Heart right ventricle (tissue), 16 donors: ENCODE measurements at regions of chr12 and their contacts with region 1.

Region 1: GRCh38 chr12:108850854-108851573 is 6.4 kb downstream of the SSH1 start:
- DNase-seq: peak; percentile 62 to 82
- ATAC-seq: peak in 7 of 8 donors; percentile 20 to 56 (median 53)
- H3K4me3 ChIP-seq: peak overlapping the region in 4 of 10 donors; percentile 35 to 40 (median 39)
- H3K27ac ChIP-seq: peak overlapping the region in 8 of 10 donors; percentile 65 to 98 (median 97)
- H3K4me1 ChIP-seq: peaks cover 50 to 96% (median 89%) of the 10 kb centered on the region in 9 donors
- H3K27me3 ChIP-seq: no peaks in the 10 kb centered on the region
- CTCF ChIP-seq: peak in 5 of 9 donors; percentile 17 to 45 (median 38)

Region 2: GRCh38 chr12:108664338-108665258 is 186.4 kb before region 1 on chr12:
- intact Hi-C with region 1: loop called in 6 of 10 experiments (anchors 2 to 5 kb)
- DNase-seq: peak; percentile 53 to 89
- ATAC-seq: peak; percentile 88 to 96 (median 92)
- H3K4me3 ChIP-seq: peak overlapping the region in 1 of 10 donors; percentile 14
- H3K27ac ChIP-seq: peak overlapping the region; percentile 36 to 86 (median 78)
- H3K4me1 ChIP-seq: peaks cover 7 to 71% (median 56%) of the 10 kb centered on the region in 9 donors
- H3K27me3 ChIP-seq: no peaks in the 10 kb centered on the region
- CTCF ChIP-seq: peak; percentile 79 to 99 (median 95)

Region 3: DNA sequence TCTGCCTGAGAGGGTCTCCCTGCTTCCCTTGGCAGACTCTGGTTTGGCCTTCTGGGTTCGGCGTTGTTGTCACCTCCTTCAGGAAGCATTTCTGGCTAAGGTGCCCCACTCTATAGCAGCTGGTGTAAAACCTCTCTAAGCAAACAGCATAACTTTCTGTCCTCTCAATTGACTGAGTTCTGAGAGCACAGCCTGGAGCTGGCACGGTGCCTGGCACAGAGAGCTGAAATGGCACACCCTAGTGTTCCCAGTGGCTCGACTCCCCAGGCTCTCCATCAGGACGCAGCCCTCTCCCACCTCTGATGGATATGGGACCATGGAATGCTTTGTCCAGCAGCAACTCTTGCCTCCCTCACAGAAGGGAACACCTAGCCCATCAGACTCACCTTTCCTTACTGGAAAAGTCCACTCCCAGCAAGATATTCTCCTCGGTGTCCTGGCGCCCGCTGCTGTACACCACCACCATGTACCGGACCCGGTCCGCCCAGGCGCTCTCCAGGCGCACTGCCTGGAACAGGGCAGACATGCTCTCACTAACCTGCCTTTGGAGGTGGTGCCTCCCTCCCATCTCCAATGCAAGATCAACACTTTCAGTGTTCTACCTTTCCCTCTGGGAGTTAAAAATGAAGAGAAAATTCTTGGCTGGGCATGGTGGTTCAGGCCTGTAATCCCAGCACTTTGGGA is 34.2 kb before region 1 on chr12:
- intact Hi-C with region 1: loop called in 1 of 10 experiments (anchors 5 kb)
- DNase-seq: peak in 1 of 2 donors; percentile 73
- ATAC-seq: peak; percentile 22 to 74 (median 42)
- H3K4me3 ChIP-seq: no peak overlapping the region
- H3K27ac ChIP-seq: peak overlapping the region in 9 of 10 donors; percentile 5 to 58 (median 25)
- H3K4me1 ChIP-seq: peaks cover 14 to 82% (median 73%) of the 10 kb centered on the region in 9 donors
- H3K27me3 ChIP-seq: no peaks in the 10 kb centered on the region
- CTCF ChIP-seq: peak in 2 of 9 donors; percentile 14 to 18

Region 4: DNA sequence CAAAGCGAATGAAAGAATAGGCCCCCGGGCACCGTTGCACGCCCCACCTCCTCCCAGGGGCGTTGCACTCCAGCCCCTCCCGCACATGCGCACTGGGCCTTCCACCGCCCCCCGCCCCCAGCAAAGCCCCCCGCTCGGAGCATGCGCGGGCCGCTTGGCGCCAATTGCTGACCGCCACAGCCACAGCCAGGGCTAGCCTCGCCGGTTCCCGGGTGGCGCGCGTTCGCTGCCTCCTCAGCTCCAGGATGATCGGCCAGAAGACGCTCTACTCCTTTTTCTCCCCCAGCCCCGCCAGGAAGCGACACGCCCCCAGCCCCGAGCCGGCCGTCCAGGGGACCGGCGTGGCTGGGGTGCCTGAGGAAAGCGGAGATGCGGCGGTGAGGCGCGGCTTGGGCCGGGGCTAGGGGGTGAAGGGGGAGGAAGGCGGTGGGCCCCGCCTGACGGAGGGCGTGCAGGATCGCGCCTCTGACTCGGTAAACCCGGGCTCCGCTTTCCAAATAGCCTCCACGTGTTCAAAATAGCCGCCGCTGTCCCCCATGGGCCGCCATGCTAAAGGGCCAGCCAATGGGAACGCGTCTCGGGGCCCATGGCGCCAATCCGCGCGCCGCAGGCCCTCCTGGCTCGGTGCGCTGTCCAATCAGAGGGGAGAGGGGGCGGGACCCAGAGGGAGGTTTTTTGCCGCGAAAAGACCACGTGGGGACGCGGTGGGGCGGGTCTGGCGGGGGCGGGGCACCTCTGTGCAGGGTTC is 246.6 kb after region 1 on chr12 and contains the start of gene UNG:
- intact Hi-C with region 1: no loop called
- DNase-seq: peak; percentile 98
- ATAC-seq: peak; percentile 95 to 98 (median 97)
- H3K4me3 ChIP-seq: peak within 1 kb of the TSS; percentile 62 to 91 (median 79)
- H3K27ac ChIP-seq: peak within 1 kb of the TSS; percentile 66 to 94 (median 88)
- H3K4me1 ChIP-seq: peaks cover 17 to 41% (median 28%) of the 10 kb centered on the region in 9 donors
- H3K27me3 ChIP-seq: no peaks in the 10 kb centered on the region
- CTCF ChIP-seq: no peak
- total RNA-seq, gene UNG: 21.6 to 37.3 (median 27.8) TPM